Sciatic nerve (tissue), 2 donors: ENCODE measurements at regions of chr2 and their contacts with region 1.

Region 1: GRCh38 chr2:70142590-70143313 is 48.1 kb downstream of the C2orf42 start:
- DNase-seq: peak; percentile 100
- ATAC-seq: peak; percentile 94

Region 2: GRCh38 chr2:69914170-69914960 is 228.4 kb before region 1 on chr2:
- intact Hi-C with region 1: loop called (anchors 5 kb)
- DNase-seq: peak; percentile 100
- ATAC-seq: peak; percentile 97

Region 3: GRCh38 chr2:69973335-69973735 is 169.4 kb before region 1 on chr2:
- intact Hi-C with region 1: no loop called
- DNase-seq: no peak
- ATAC-seq: no peak

Region 4: GRCh38 chr2:70086838-70087701 is 55.7 kb before region 1 on chr2 and contains the start of gene PCBP1:
- intact Hi-C with region 1: loop called (anchors 5 kb)
- DNase-seq: peak; percentile 99
- ATAC-seq: peak; percentile 95
- total RNA-seq, gene PCBP1: 285 TPM

Region 5: DNA sequence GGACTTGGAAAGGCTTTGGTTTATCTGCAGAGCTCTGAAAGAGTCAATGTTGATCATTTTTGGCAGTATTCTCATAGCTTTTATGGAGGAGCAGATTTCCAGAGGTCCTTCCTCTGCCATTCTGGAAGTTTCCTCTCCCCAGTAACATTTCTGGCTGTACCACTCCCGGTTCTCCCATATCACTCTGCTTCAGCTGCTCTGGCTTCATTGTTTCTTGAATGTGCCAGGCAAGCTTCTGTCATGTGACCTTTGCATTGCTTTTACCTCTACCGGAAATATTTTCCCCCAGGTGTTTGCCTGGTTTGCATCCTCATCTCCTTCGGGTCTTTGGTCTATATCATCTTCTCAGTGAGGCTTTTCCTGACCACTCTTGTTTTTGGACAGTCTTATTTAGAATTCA is 127.6 kb after region 1 on chr2:
- intact Hi-C with region 1: no loop called
- DNase-seq: no peak
- ATAC-seq: no peak